ENCODE measurements at regions of chr17 and their contacts with region 1.

Region 1: DNA sequence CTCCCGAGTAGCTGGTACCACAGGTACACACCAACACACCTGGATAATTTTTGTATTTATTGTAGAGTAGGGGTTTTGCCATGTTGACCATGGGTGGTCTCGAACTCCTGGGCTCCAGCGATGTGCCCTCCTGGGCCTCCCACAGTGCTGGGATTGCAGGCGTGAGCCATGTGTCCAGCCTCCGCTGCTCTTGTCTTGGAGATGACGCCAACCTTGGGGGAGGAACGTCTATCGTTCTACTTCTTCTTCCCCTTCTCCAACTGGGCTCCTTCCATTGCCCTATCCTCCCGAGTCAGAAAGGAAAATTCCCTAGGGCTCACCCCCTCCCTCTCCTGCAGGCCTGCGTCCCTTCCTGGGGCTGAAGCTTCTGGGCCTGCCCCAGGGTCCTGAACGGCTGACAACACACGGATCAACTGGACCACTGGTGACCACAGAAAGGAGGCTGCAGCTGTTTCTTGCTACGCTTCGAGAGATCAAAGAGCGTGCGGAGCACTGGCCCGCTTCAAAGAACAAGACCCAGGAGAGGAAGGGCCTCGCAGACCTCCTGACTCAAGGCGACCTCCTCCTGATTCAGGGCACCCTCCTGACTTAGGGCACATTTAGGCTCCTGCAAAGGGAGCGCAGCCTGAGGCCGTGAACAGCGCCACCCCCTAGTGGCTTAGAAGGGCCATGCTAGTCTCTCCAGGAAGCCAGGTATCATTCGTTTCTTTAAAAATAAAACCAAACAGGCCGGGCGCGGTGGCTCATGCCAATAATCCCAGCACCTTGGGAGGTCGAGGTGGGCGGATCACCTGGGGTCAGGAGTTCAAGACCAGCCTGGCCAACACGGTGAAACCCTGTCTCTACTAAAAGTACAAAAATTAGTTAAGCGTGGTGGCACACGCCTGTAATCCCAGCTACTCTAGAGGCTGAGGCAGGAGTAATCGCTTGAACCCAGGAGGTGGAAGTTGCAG is 48.5 kb upstream of the HELZ start:
- DNase-seq: peak; percentile 84
- ATAC-seq: peak; percentile 100
- H3K4me3 Mint-ChIP-seq: peak overlapping the region; percentile 32
- H3K27ac Mint-ChIP-seq: peak overlapping the region; percentile 52
- H3K4me1 Mint-ChIP-seq: peaks cover 4% of the 10 kb centered on the region
- H3K27me3 Mint-ChIP-seq: no peaks in the 10 kb centered on the region

Region 2: GRCh38 chr17:67221062-67221998 is 72.2 kb before region 1 on chr17:
- CTCF ChIA-PET with region 1: interaction called, 43 read pairs
- DNase-seq: peak; percentile 48
- ATAC-seq: peak; percentile 61
- H3K4me3 Mint-ChIP-seq: no peak overlapping the region
- H3K27ac Mint-ChIP-seq: no peak overlapping the region
- H3K4me1 Mint-ChIP-seq: peaks cover 23% of the 10 kb centered on the region
- H3K27me3 Mint-ChIP-seq: no peaks in the 10 kb centered on the region

Region 3: GRCh38 chr17:67280279-67280678 is 13.2 kb before region 1 on chr17:
- CTCF ChIA-PET with region 1: interaction called, 31 read pairs
- DNase-seq: no peak
- ATAC-seq: no peak
- H3K4me3 Mint-ChIP-seq: no peak overlapping the region
- H3K27ac Mint-ChIP-seq: no peak overlapping the region
- H3K4me1 Mint-ChIP-seq: no peaks in the 10 kb centered on the region
- H3K27me3 Mint-ChIP-seq: no peaks in the 10 kb centered on the region

Measured in activated CD8-positive, alpha-beta memory T cell treated with anti-CD3 and anti-CD28 coated beads, Interleukin-2, amount 10 ng/mL, durations not matched to agents 7 days and 5 days (primary cell).